Activated B cell treated with CpG ODN at 0.5 μM for 24 hours (primary cell): ENCODE measurements at regions of chr12 and their contacts with region 1.

Region 1: DNA sequence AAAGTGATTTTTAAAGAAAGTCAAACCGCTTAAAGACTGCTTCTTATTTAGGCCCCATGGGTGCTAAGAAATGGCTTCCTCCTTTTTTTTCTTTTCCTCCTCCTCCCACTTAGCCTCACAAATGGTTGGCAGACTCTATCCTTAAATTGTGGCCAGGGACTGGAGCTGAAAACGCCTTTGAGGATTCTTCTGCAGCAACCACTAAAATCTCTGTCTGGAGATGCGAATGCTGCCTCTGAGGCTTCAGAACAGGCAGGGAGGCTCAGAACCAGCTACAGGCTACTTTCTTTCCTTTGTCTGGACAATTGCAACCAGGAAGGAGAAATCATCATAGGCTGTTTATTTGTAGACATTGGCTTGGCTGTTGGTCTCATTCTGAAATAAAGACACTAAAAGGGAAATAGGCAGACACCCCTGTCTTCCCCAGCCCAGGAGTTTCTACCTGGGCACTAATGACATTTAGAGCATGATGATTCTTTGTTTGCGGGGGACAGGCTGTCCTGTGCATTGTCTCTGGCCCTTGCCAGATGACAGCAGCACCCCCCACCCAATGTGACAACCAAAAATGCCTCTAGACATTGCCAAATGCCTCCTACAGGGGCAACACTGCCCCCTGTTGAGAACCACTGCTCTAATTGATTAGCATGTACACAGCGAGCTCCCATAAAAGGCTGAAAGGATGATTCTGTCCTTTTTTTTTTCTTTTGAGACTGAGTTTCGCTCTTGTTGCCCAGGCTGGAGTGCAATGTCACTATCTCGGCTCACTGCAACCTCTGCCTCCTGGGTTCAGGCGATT is 50.3 kb downstream of the MAP1LC3B2 start:
- DNase-seq: no peak
- ATAC-seq: peak; percentile 61
- H3K4me3 Mint-ChIP-seq: no peak overlapping the region
- H3K27ac Mint-ChIP-seq: no peak overlapping the region
- H3K4me1 Mint-ChIP-seq: peaks cover 19% of the 10 kb centered on the region
- H3K27me3 Mint-ChIP-seq: peaks cover 8% of the 10 kb centered on the region
- CTCF ChIP-seq: no peak

Region 2: GRCh38 chr12:115998119-115998633 is 611.3 kb before region 1 on chr12:
- CTCF ChIA-PET with region 1: interaction called, 5 read pairs
- POLR2A ChIA-PET with region 1: no interaction called
- intact Hi-C with region 1: loop called (anchors 2 kb)
- DNase-seq: no peak
- ATAC-seq: peak; percentile 90
- H3K4me3 Mint-ChIP-seq: no peak overlapping the region
- H3K27ac Mint-ChIP-seq: peak overlapping the region; percentile 78
- H3K4me1 Mint-ChIP-seq: peaks cover 10% of the 10 kb centered on the region
- H3K27me3 Mint-ChIP-seq: no peaks in the 10 kb centered on the region
- CTCF ChIP-seq: peak; percentile 57

Region 3: GRCh38 chr12:116015525-116015924 is 594.0 kb before region 1 on chr12:
- CTCF ChIA-PET with region 1: interaction called, 3 read pairs
- POLR2A ChIA-PET with region 1: no interaction called
- intact Hi-C with region 1: loop called (anchors 2 kb)
- DNase-seq: no peak
- ATAC-seq: peak; percentile 67
- H3K4me3 Mint-ChIP-seq: no peak overlapping the region
- H3K27ac Mint-ChIP-seq: no peak overlapping the region
- H3K4me1 Mint-ChIP-seq: no peaks in the 10 kb centered on the region
- H3K27me3 Mint-ChIP-seq: no peaks in the 10 kb centered on the region
- CTCF ChIP-seq: no peak

Region 4: GRCh38 chr12:116687888-116688287 is 78.4 kb after region 1 on chr12:
- CTCF ChIA-PET with region 1: interaction called, 3 read pairs
- POLR2A ChIA-PET with region 1: no interaction called
- intact Hi-C with region 1: loop called (anchors 5 kb)
- DNase-seq: peak; percentile 44
- ATAC-seq: peak; percentile 94
- H3K4me3 Mint-ChIP-seq: no peak overlapping the region
- H3K27ac Mint-ChIP-seq: no peak overlapping the region
- H3K4me1 Mint-ChIP-seq: peaks cover 25% of the 10 kb centered on the region
- H3K27me3 Mint-ChIP-seq: peaks cover 9% of the 10 kb centered on the region
- CTCF ChIP-seq: no peak